Mucosa of descending colon (tissue), 3 donors: ENCODE measurements at regions of chr1 and their contacts with region 1.

Region 1: GRCh38 chr1:30779294-30780071 is 21.9 kb upstream of the LAPTM5 start:
- DNase-seq: peak; percentile 87 to 94 (median 92)
- ATAC-seq: peak; percentile 84
- H3K4me3 ChIP-seq: no peak overlapping the region
- H3K4me1 ChIP-seq: peaks cover 8% of the 10 kb centered on the region
- CTCF ChIP-seq: peak; percentile 90

Region 2: DNA sequence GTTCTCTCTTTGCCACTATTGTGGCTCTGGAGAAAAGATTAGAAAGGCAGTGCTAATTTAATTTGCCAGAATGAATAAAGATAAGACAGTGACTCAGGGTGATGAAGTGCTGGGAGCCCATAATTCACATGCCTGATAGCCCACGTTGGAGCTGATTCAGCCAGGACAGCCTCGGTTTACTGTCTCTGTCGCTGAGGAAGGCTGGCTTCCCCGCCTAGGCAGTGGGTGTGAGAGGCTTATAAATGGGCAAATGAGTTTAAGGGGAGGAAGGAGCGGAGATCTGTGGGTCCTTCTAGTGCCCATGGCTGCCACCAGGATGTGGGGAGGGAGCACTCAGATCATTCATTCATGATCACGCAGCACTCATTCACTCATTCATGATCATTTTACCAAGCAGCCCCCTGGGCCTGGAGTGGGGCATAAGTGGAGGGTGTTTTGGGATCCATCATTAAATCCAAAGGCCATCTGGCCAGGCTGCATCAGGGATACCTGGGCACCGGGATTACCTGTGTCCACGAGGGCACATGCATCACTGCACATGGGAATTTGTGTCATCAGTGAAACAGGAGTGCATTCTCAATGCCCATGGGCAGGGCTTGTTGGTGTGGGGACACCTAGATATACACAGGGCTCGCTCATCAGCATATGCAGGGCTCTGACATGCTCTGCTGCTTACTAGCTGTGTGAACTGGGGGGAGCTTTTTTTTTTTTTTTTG is 371.5 kb before region 1 on chr1:
- intact Hi-C with region 1: no loop called
- DNase-seq: no peak
- ATAC-seq: no peak
- H3K4me3 ChIP-seq: no peak overlapping the region
- H3K4me1 ChIP-seq: no peaks in the 10 kb centered on the region
- CTCF ChIP-seq: no peak

Region 3: DNA sequence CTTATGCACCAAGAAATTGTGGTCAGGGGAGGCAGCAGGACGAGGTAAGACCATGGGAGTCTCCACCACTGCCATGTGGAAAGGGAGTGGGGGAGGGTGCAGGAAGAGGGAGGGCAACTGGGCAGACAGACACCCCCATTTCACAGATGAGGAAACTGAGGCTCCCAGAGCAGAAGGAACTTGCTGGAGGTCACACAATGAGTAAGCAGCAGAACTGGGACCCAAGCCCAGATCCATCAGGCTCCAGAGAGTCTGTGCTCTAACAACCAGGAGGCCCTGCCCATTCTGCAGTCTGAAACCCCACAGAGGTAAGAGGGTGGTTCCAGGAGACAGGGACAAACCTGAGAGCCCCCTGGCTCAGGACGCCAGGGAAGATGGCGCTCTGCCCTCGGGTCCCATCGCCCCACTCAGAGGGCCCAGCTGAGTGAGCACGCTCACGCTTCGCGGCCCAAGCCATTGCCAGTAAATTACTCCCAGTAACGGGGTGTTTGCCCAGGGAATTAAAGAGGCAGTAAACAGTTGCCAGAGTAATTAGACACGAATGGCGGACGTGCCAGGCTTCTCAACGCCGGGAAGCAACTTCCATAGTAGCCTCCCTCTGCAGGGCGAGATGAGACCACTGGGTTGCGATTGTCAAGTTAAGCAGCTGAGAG is 115.3 kb before region 1 on chr1:
- intact Hi-C with region 1: no loop called
- DNase-seq: no peak
- ATAC-seq: no peak
- H3K4me3 ChIP-seq: no peak overlapping the region
- H3K4me1 ChIP-seq: no peaks in the 10 kb centered on the region
- CTCF ChIP-seq: no peak

Region 4: DNA sequence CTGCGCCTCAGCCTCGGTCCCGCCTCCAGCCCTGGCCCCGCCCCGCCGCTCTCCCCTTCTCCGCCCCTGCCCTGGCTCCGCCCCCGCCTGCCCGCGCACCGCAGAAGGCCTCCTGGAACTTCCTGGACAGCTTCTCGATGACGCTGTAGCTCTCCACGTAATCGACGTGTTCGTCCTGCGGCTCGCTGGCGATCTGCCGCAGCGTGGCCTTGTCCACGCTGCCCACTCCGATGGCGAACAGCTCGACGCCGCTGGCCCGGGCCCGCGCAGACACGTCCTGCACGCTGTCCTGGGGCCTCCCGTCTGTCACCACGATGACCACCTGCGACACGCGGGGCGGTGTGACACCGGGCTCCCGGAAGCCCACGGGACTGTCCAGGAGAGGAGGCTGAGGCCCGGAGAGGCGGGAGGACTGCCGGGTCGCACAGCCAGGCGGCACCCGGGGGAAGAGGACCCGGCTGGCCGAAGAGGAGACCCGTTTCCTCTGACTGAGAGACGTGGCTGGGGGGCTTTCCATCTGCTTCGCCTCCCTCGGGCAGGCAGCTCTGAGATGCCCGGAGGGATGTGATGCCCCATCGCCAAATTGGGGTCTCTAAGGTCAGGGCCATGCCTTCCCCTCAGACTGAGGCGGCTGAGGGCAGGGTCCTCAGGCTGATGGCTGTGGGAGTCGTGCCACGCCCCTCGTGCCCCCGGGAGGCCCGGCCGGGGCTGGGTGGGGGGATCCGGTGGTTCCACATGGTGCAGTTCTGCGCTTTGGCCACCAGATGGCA is 60.7 kb before region 1 on chr1:
- intact Hi-C with region 1: loop called (anchors 1 to 5 kb)
- DNase-seq: peak; percentile 78 to 91 (median 90)
- ATAC-seq: peak; percentile 85
- H3K4me3 ChIP-seq: peak overlapping the region; percentile 19
- H3K4me1 ChIP-seq: peaks cover 13% of the 10 kb centered on the region
- CTCF ChIP-seq: peak; percentile 90

Region 5: GRCh38 chr1:30911046-30911954 is 131.8 kb after region 1 on chr1:
- intact Hi-C with region 1: loop called (anchors 5 kb)
- DNase-seq: peak; percentile 86 to 97 (median 90)
- ATAC-seq: peak; percentile 81
- H3K4me3 ChIP-seq: no peak overlapping the region
- H3K4me1 ChIP-seq: peaks cover 11% of the 10 kb centered on the region
- CTCF ChIP-seq: peak; percentile 47